ENCODE measurements at regions of chr3 and their contacts with region 1.

Region 1: GRCh38 chr3:115783938-115784738 is 160.8 kb downstream of the GAP43 start:
- DNase-seq: peak; percentile 90
- CTCF ChIP-seq: peak; percentile 99

Region 2: DNA sequence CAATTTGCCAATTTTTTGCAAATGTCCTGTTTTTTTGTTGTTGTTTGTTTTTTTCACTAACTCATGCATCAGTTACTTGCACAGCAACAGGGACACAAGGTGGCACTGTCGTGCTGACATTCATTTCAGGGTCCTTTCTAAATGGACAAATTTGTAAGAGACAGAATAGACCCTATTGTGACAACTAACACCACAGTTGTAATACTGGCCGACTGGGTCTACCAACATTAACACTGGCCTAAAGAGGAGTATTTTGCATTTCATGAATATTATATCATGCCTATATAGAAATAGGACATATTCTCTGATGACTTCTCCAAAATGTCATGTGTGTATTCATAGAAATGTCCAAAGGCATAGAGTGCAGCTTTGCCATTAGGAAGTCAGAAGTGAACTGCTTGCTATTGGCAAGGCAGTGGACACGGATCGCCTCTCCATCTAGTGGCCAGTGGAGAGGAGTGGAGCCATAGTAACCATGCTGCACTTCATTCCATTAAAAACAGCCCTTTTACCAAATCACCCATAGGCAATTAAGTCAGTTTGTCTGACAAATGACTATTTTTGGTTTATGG is 691.8 kb before region 1 on chr3:
- CTCF ChIA-PET with region 1: interaction called, 16 read pairs
- POLR2A ChIA-PET with region 1: no interaction called
- DNase-seq: peak; percentile 17
- CTCF ChIP-seq: peak; percentile 80

Region 3: DNA sequence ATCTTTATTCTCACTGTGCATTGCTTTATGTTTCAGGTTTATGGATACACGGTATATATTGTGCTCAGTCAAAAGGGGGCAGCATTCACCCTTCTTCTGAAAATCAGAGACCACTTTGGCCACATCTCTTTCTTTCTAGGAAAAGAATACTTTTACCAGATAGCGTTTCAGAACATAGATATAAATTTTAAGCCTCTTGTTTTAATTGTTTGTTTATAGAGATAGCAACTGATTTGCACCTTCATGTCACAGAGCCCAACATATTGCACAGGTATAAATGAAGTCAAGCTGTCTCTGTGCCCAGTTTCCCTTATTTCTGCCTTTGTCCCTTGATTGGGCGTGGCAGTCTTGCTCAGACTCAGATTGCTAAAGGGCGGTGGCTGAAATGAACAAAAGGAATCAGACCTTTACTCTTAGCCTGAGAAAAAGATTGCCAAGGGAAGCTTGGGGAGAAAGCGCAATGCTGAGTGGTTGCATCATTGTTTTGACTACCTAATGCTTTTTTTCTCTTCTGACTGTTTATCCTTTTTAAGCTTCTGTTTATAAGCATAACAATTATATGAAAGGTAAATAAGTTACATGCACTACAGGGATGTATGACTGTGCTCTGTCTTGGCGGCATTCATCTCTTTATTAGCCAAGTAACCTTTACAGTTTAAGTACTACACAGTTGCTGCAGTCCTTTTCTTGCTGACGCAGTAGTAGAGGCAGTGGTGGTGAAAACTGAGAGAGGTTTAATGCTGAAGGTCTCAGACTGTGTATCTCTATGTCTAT is 566.3 kb before region 1 on chr3:
- CTCF ChIA-PET with region 1: interaction called, 18 read pairs
- POLR2A ChIA-PET with region 1: no interaction called
- DNase-seq: peak; percentile 26
- CTCF ChIP-seq: peak; percentile 50

Region 4: GRCh38 chr3:115741650-115742049 is 42.5 kb before region 1 on chr3:
- CTCF ChIA-PET with region 1: no interaction called
- POLR2A ChIA-PET with region 1: no interaction called
- DNase-seq: no peak
- CTCF ChIP-seq: no peak

Region 5: GRCh38 chr3:115766587-115767480 is 17.3 kb before region 1 on chr3:
- CTCF ChIA-PET with region 1: interaction called, 28 read pairs
- POLR2A ChIA-PET with region 1: no interaction called
- DNase-seq: no peak
- CTCF ChIP-seq: no peak

Region 6: DNA sequence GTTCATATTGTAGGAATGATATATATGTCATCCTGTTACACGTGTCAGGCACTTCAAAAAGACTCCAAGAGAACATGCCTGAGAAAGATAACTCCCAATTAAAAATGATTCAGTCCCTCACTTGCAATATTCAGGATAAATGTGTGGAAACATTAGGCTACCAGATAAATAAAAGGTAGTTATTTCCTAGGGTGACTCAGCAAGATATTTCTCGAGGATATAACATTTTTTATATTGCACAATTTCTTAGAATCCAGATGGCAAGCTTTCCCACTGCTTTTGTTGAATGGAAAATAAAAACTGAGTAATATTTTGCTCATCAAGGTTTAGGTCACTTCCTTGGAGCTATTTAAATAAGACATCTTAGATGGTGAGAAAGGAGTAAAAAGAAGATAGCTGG is 20.6 kb after region 1 on chr3:
- CTCF ChIA-PET with region 1: interaction called, 13 read pairs
- POLR2A ChIA-PET with region 1: no interaction called
- DNase-seq: no peak
- CTCF ChIP-seq: no peak

Measured in GM10248 (cell line).